Psoas muscle (tissue), 8 donors: ENCODE measurements at regions of chr2 and their contacts with region 1.

Region 1: DNA sequence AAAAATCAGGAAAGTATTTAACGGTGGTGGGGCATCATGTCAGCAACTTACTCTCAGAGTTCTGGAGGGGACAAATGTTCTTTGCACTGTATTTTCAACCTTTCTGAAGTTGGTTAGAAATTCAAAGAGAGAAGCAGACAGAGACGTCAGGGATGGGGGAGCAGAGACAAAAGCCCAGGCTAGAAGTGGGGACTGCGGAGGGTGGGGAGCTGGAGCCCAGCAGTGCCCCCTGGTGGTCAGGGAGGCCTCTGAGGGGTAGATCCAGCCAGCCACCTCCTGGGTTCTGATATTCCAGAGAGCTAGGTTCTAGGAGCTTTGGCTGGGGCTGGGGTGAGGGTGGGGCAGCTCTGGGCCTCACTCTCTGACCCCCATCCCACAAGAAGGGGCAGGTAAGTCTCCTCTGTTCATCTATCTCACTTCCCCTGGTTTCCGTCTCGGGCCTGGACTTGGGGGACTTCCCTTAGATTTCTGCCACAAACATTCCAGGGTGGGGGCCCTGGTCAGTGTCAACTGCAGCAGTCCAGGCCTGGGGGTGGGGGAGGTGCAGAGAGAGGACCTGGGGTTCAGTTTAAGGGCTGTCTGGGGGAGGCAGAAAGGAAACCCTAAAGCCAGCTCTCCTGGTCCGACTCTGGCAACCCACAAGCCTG is 8.9 kb downstream of the TNS1 start:
- DNase-seq: peak; percentile 75 to 88
- ATAC-seq: peak; percentile 64 to 76 (median 70)
- H3K4me3 ChIP-seq: no peak overlapping the region
- H3K27ac ChIP-seq: peak overlapping the region; percentile 50
- H3K4me1 ChIP-seq: peaks cover 27% of the 10 kb centered on the region
- H3K27me3 ChIP-seq: no peaks in the 10 kb centered on the region
- CTCF ChIP-seq: peak; percentile 71

Region 2: DNA sequence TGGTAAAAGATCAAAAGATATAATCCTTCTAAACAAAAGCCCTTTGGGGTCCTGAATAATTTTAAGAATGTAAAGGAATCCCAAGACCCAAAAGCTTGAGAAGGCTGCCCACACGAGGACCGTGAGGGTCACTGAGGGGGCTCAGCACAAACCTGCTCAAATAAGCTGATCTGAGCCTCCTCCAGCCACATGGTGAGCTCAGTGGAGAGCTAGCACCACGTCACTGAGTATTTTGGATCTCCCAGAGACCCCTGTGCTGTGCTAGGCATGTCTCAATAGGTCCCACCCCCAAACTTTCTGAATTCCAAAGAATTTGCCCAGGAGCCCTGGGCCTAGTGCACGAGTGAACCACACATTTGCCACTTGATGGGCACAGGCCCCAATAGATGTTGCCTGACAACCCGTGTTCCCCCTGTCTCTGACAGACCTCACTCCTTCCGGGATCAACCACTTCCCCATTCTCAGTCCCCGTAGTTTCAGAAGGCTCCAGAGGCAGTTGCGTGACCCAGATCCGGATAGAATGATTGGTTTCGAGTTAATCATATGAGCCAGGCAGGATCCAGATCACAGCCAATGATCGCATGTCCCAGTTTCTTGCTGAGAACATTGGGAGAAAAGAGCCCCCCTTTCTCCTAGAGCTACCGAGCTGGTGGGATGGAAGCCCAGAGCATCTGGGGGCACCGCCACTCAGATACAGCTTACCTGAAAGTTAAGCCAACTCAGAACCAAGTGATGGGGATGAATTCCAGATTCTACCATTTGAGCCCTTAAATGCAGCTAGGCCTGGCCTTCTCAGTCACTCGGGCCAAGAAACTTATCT is 195.0 kb before region 1 on chr2:
- intact Hi-C with region 1: no loop called
- DNase-seq: no peak
- ATAC-seq: no peak
- H3K4me3 ChIP-seq: no peak overlapping the region
- H3K27ac ChIP-seq: peak overlapping the region; percentile 68
- H3K4me1 ChIP-seq: peaks cover 28% of the 10 kb centered on the region
- H3K27me3 ChIP-seq: no peaks in the 10 kb centered on the region
- CTCF ChIP-seq: no peak

Region 3: GRCh38 chr2:217922101-217923006 is 71.6 kb before region 1 on chr2:
- intact Hi-C with region 1: no loop called
- DNase-seq: peak; percentile 57 to 78
- ATAC-seq: peak; percentile 48 to 64 (median 50)
- H3K4me3 ChIP-seq: peak overlapping the region; percentile 8
- H3K27ac ChIP-seq: peak overlapping the region; percentile 97
- H3K4me1 ChIP-seq: peaks cover 84% of the 10 kb centered on the region
- H3K27me3 ChIP-seq: no peaks in the 10 kb centered on the region
- CTCF ChIP-seq: peak; percentile 37

Region 4: DNA sequence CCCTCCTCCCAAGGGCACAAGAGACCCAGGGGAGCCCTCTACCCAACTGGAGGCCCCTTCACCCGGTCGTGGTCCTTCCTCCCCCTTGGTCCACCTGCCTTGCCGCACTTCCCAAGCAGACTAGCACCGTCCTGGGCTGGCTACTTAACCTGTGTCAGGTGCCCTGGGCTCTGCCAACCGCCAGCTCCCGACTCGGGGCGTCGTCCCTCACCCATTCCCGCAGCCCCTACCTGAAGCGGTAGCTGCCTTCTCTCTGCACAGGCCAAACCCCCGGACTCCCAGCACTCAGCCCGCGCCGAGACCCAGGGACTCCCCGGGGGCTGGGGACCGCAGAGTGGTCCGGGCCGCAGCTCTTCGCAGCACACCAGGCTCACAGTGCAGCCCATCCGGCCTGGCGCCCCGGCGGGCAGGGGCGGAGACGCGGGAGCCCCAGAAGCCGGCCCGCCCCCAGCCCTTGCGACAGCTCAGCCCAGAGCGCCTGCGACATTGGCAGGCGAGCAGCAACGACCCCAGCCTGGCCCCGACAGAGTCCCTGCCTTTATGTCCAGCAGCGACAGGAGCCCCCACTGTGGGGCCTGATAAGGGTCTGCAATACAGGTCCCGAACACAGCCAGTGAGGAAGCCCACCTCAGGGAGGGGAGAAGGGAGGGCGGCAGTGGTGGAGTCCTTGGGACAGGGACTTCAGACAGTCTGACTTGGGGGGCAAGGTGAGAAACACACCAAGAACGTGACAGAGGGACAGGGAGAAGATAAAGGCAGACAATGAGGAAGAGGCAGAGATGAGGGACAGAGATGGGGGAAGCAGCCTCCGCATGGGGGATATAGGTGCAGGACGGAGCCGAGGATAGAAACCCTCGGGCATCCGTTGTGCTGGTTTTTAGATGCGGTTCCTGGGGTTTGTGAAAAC is 39.9 kb after region 1 on chr2:
- intact Hi-C with region 1: loop called (anchors 5 kb)
- DNase-seq: peak in 1 of 2 donors; percentile 54
- ATAC-seq: no peak
- H3K4me3 ChIP-seq: no peak overlapping the region
- H3K27ac ChIP-seq: no peak overlapping the region
- H3K4me1 ChIP-seq: peaks cover 16% of the 10 kb centered on the region
- H3K27me3 ChIP-seq: no peaks in the 10 kb centered on the region
- CTCF ChIP-seq: no peak

Region 5: GRCh38 chr2:218066926-218067515 is 73.1 kb after region 1 on chr2:
- intact Hi-C with region 1: loop called in 1 of 2 experiments (anchors 5 kb)
- DNase-seq: no peak
- ATAC-seq: no peak
- H3K4me3 ChIP-seq: no peak overlapping the region
- H3K27ac ChIP-seq: no peak overlapping the region
- H3K4me1 ChIP-seq: no peaks in the 10 kb centered on the region
- H3K27me3 ChIP-seq: peaks cover 0 to 5% (median 3%) of the 10 kb centered on the region in 3 donors
- CTCF ChIP-seq: no peak

Region 6: GRCh38 chr2:218343591-218343990 is 349.7 kb after region 1 on chr2:
- intact Hi-C with region 1: no loop called
- DNase-seq: no peak
- ATAC-seq: no peak
- H3K4me3 ChIP-seq: no peak overlapping the region
- H3K27ac ChIP-seq: no peak overlapping the region
- H3K4me1 ChIP-seq: no peaks in the 10 kb centered on the region
- H3K27me3 ChIP-seq: peaks cover 0 to 2% (median 0%) of the 10 kb centered on the region in 3 donors
- CTCF ChIP-seq: no peak